Lower leg skin (tissue), 4 donors: ENCODE measurements at regions of chr1 and their contacts with region 1.

Region 1: DNA sequence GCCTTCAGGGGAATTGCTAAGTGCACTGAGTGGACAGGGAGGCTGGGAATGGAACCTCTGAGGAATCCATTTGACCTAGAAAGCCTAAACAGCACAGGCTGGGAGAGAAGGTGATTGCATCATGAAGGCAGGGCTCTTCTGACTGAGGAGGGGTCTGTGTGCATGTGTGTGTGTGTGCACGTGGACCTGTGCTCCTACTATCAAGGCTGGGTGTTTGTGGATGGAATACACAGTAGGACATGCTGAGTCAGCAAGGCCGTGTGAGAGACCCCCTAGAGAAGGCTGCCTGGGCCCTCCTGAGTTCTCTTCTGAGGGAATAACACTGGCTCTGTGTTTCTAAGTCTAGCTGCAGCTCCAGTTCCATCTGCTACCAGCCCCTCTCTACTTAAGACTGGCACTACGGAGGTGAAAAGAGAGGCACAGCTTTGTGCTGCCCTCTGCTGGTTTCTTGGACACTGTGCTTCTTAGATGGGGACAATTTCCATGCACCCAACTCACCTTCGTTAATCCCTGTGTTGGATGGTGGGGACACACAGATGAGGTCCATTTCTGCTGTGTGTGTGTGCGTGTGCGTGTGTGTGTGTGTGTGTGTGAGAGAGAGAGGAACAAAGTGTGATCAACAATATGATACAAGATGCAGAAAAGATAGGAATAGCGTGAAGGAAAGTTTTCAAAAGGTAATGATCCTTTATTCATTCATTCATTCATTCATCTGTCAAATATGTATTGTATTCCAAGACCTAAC is 6.2 kb upstream of the EFCAB14 start:
- DNase-seq: peak; percentile 73 to 88
- H3K4me3 ChIP-seq: no peak overlapping the region
- CTCF ChIP-seq: peak in 1 of 3 donors; percentile 80
- POLR2A ChIP-seq: no peak

Region 2: DNA sequence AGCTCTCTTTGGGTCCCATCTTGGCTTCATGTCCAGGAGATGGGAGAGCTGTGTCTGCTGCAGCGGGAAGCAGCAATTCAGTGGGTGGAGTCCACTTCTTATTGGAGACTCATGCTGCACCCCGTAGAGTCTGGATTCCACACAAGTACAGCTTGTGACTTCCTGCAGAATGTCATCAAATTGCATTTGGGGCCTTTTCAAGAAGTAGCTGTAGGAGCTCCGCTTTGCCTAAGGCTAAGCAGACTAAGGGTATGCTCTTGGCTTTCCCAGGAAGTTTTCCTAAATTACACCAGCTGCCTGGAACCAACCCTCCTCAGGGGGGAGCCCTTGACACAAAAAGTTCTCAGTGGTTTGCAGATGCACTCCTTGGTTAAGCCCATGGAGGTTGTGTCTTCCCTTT is 102.8 kb before region 1 on chr1:
- intact Hi-C with region 1: loop called (anchors 10 kb)
- DNase-seq: no peak
- H3K4me3 ChIP-seq: no peak overlapping the region
- CTCF ChIP-seq: no peak
- POLR2A ChIP-seq: no peak

Region 3: GRCh38 chr1:46806271-46807020 is 81.3 kb after region 1 on chr1:
- intact Hi-C with region 1: no loop called
- DNase-seq: peak; percentile 89 to 96
- H3K4me3 ChIP-seq: no peak overlapping the region
- CTCF ChIP-seq: no peak
- POLR2A ChIP-seq: no peak